ENCODE measurements at regions of chr19 and their contacts with region 1.

Region 1: DNA sequence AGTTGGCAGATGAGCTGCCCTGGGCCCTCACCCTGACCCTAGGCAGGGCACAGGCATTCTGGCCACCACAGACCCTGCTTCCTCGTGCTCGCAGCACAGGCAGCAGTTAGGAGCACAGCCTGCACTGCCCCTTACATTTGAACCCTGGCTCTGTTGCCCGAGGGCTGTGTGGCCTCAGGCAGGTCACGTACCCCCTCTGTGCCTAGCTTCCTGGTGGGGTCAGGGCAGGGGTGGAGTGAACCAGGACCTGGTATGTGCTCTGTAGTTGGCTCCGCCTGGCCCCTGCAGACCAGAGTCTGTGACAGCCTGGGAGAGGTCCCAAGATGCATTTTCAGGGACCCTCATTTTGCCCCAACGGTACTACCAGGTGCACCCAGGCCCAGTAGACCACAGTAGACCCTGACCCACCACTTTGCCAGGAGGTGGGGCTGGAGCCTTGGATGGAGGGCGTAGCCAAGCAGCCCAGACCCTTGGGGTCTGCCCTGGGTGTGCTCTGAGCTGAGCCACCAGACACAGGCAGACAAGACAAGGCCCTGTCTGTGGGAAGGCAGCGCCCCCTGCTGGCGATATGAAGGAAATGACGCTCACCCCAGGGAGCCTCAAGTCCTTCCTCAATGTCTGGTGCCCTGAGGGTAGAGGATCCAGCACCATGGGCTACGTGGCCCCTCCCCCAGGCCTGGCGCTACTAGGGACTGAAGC is 9.1 kb downstream of the LYL1 start:
- DNase-seq: peak; percentile 73
- ATAC-seq: peak; percentile 56
- H3K4me3 Mint-ChIP-seq: peak overlapping the region; percentile 29
- H3K27ac Mint-ChIP-seq: peak overlapping the region; percentile 95
- H3K4me1 Mint-ChIP-seq: peaks cover 36% of the 10 kb centered on the region
- H3K27me3 Mint-ChIP-seq: no peaks in the 10 kb centered on the region
- CTCF ChIP-seq: peak; percentile 71

Region 2: DNA sequence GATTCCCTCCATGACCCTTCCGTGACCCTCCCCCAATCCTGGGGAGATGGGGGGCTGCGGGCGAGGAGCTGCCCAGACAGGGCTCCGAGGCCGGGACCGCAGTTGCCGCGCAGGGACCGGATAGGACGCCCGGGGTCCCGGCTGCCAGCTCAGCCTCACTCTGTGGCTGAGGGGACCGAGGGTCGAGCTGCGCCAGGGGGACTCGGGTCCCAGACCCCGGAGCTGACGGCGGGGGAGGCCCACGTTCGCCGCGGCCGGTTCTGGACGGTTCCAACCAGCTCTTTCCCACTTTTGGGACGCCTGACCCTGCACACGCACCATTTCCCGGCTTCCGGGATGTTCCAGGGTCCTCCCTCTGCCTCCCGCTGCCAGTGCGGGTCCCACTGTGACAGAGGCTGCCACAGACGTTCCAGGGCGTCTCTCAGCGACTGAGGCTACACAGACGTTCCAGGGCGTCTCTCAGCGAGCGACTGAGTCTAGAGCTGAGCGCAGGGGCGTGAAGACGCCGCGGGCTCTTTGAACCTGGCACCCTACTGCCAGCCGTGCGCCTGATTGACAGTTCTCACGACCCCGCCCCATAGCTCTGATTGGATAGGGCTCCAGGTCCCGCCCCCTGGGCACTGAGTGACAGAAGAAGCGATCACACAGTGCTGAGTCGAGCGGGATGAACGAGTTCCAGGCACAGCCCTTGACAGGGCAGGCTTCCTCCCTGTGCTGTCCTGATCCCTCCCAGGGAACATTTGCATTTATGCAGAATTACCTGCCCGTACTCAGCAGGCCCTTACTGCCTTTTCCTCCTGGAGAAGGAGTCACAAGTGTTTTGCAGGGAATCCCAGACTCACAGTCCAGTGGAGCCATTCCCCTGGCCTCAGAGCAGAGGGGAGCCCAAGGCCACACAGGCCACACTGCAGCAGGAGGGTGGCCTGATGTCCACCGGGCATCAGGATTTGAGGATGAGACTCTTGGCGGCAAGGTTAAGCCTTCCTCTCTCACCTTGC is 760.1 kb before region 1 on chr19 and contains the start of gene ZNF563:
- CTCF ChIA-PET with region 1: no interaction called
- POLR2A ChIA-PET with region 1: no interaction called
- intact Hi-C with region 1: no loop called
- DNase-seq: peak; percentile 93
- ATAC-seq: peak; percentile 86
- H3K4me3 Mint-ChIP-seq: peak within 1 kb of the TSS; percentile 96
- H3K27ac Mint-ChIP-seq: peak within 1 kb of the TSS; percentile 92
- H3K4me1 Mint-ChIP-seq: peaks cover 39% of the 10 kb centered on the region
- H3K27me3 Mint-ChIP-seq: no peaks in the 10 kb centered on the region
- CTCF ChIP-seq: no peak
- total RNA-seq, gene ZNF563: 3.6 and 3.7 TPM in 2 replicates

Region 3: DNA sequence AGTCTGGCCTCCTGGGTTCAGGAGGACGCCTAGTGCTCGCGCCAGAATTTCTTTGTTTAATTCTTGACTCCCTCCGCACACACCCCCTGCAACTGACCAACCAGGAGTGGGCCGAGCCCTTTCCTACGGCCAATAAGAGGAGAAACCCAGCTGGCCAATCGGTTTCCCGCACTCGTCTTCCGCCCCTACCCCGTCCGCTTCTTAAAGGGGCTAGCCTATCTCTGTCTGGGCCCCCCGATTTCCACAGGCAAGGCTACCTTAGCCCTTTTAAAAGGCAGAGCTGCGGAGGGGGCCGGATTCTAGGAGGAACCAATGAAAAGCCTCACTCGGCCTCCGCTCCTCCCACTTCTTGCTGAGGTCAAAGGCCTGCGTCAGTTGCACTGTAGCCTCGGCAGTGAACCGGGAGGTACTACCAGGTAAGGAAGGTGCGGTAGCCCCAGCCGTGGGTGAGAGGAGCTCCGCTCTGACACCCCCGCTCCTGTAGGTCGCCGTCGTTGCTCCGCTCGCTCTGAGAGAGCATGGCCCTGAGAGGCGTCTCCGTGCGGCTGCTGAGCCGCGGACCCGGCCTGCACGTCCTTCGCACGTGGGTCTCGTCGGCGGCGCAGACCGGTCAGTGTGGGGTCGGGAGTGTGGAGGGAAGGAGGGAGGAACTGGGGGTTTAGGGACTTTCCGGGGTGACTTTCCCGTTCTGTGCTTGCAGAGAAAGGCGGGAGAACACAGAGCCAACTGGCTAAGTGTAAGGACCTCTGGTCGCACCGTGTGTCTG is 202.6 kb before region 1 on chr19 and contains the start of gene GCDH:
- CTCF ChIA-PET with region 1: interaction called, 6 read pairs
- POLR2A ChIA-PET with region 1: no interaction called
- intact Hi-C with region 1: loop called (anchors 2 kb)
- DNase-seq: peak; percentile 81
- ATAC-seq: peak; percentile 93
- H3K4me3 Mint-ChIP-seq: peak within 1 kb of the TSS; percentile 98
- H3K27ac Mint-ChIP-seq: peak within 1 kb of the TSS; percentile 90
- H3K4me1 Mint-ChIP-seq: peaks cover 21% of the 10 kb centered on the region
- H3K27me3 Mint-ChIP-seq: no peaks in the 10 kb centered on the region
- CTCF ChIP-seq: no peak
- total RNA-seq, gene GCDH: 62.3 and 73.9 TPM in 2 replicates

Region 4: DNA sequence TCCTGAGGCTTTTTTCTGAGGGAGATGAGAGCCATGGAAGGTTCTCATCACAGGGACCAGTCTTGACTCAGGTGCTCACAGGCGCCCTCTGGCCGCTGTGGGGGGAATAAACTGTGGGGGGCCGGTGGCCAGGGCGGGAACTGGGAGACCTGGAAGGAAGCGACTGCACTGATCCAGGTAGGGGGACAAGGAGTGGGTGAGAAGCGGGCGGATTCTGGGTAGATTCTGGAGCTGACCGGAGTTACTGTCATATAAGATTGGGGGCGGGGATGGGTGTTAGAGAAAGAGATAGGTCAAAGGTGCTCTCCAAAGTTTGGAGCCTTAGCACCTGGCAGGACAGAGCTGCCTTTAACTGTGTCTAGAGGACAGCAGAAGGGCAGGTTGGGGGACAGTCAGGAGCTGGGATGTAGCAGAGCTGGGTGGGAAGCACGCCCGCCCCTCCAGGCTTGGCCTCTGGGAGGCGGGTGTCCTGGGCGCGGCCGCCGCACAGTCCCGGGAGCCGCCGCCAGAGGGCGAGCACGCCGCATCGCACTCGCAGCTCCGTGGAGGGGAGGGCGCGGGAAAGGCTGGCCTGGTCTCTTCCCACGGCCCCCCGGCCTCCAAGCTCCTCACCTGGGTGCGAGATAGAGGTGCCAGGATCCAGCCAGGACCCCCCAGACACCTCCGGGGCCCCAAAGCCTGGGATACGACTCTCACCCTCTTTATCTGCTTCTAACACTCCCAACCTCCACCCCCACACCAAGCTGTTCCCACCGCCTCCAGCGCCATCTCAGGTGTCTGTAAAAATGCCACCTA is 128.3 kb before region 1 on chr19:
- CTCF ChIA-PET with region 1: interaction called, 53 read pairs
- POLR2A ChIA-PET with region 1: interaction called, 11 read pairs
- intact Hi-C with region 1: loop called (anchors 1 kb)
- DNase-seq: peak; percentile 91
- ATAC-seq: peak; percentile 97
- H3K4me3 Mint-ChIP-seq: peak overlapping the region; percentile 87
- H3K27ac Mint-ChIP-seq: peak overlapping the region; percentile 69
- H3K4me1 Mint-ChIP-seq: peaks cover 7% of the 10 kb centered on the region
- H3K27me3 Mint-ChIP-seq: no peaks in the 10 kb centered on the region
- CTCF ChIP-seq: no peak

Region 5: GRCh38 chr19:12983542-12984142 is 109.9 kb before region 1 on chr19:
- CTCF ChIA-PET with region 1: interaction called, 106 read pairs
- POLR2A ChIA-PET with region 1: interaction called, 8 read pairs
- intact Hi-C with region 1: loop called (anchors 1 kb)
- DNase-seq: peak; percentile 94
- ATAC-seq: peak; percentile 78
- H3K4me3 Mint-ChIP-seq: no peak overlapping the region
- H3K27ac Mint-ChIP-seq: no peak overlapping the region
- H3K4me1 Mint-ChIP-seq: peaks cover 5% of the 10 kb centered on the region
- H3K27me3 Mint-ChIP-seq: peaks cover 3% of the 10 kb centered on the region
- CTCF ChIP-seq: peak; percentile 65

Region 6: GRCh38 chr19:13117772-13118423 is 24.3 kb after region 1 on chr19 and contains the start of gene NACC1:
- CTCF ChIA-PET with region 1: interaction called, 3 read pairs
- POLR2A ChIA-PET with region 1: interaction called, 158 read pairs
- intact Hi-C with region 1: no loop called
- DNase-seq: peak; percentile 94
- ATAC-seq: peak; percentile 81
- H3K4me3 Mint-ChIP-seq: peak within 1 kb of the TSS; percentile 99
- H3K27ac Mint-ChIP-seq: peak within 1 kb of the TSS; percentile 96
- H3K4me1 Mint-ChIP-seq: peaks cover 64% of the 10 kb centered on the region
- H3K27me3 Mint-ChIP-seq: no peaks in the 10 kb centered on the region
- CTCF ChIP-seq: no peak
- total RNA-seq, gene NACC1: 62.1 and 68.8 TPM in 2 replicates

Region 7: DNA sequence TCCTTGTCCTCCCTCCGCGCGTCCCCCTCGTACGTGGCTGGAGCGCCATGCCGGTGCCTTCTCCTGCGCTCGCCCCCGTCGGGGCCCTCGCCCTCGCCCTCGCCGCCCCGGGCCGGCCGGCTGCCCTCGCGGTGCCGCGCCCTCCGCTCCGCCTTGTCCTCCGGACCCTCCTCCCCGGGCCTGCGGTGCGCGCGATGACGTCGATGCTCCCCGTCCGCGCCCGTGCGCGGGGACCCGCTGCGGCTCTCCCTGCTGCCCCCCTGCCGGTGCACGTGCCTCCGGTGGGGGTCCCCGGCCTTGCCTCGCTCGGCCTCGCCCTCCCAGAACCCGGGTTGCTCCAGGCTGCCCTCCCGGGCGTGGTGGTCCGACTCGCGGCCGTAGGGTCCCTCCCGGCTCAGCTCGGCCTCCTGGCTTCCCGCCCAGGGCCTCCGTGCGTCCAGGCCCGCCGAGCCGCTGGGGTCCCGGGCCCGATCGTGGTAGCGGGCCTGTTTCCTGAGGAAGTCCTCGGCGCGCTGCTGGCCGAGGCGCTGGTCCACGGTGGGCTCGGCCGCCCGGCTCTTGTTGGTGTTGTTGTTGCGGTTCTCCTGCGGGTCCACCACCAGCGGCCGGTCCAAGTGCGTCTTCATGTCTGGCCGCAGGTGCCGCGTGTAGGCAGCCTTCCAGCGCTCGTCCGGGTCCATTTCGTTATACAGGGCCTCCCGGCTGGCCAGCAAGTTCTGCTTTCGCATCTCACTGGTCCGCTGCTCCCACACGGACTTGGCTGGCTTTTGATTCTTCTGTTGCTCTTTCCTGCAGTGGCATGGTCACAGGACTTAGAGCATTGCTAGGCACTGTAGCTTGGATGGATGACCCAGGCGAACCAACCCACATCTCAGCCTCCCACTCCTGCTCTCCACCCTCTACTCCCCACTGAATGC is 205.3 kb after region 1 on chr19:
- CTCF ChIA-PET with region 1: no interaction called
- POLR2A ChIA-PET with region 1: no interaction called
- intact Hi-C with region 1: no loop called
- DNase-seq: no peak
- ATAC-seq: no peak
- H3K4me3 Mint-ChIP-seq: no peak overlapping the region
- H3K27ac Mint-ChIP-seq: no peak overlapping the region
- H3K4me1 Mint-ChIP-seq: peaks cover 2% of the 10 kb centered on the region
- H3K27me3 Mint-ChIP-seq: peaks cover 39% of the 10 kb centered on the region
- CTCF ChIP-seq: no peak

Measured in activated B cell treated with CpG ODN at 0.5 μM for 24 hours (primary cell).